ENCODE measurements at regions of chr2 and their contacts with region 1.

Region 1: GRCh38 chr2:112884869-112885505 is 26.0 kb upstream of the IL37 start:
- DNase-seq: peak; percentile 83
- CTCF ChIP-seq: peak; percentile 94

Region 2: DNA sequence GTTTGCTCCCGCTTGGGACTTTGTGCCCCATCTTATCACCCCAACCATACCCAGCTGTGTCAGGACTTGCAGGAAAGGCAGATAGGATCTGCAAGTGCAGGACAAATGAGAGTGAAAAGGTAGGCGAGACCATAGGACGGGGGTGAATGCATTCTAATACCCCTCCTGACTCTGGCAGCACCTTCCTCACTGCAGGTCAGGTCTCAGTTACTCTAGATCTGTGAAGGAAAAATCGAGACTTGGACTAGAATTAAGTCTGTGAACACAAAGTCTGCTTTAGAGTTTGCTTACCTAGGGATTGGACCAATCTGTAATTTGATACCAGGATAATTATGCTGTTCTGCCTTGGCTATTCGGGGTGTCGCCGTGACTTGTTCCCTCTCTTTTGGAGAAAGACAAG is 144.5 kb before region 1 on chr2:
- CTCF ChIA-PET with region 1: interaction called, 14 read pairs
- POLR2A ChIA-PET with region 1: no interaction called
- DNase-seq: no peak
- CTCF ChIP-seq: no peak

Region 3: GRCh38 chr2:112784199-112785189 is 100.5 kb before region 1 on chr2 and contains the start of gene IL1A:
- CTCF ChIA-PET with region 1: interaction called, 23 read pairs
- POLR2A ChIA-PET with region 1: no interaction called
- DNase-seq: no peak
- CTCF ChIP-seq: no peak

Region 4: DNA sequence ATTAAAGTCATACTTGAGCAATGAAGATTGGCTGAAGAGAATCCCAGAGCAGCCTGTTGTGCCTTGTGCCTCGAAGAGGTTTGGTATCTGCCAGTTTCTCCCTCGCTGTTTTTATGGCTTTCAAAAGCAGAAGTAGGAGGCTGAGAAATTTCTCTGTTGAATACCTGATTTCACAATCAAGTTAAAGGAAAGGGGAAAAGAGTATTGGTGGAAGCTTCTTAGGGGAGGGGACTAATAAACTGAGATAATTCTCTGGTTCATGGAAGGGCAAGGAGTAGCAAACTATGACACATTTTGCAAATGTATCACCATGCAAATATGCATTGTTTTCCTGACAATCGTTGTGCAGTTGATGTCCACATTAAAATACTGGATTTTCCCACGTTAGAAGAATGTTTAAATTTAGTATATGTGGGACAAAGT is 48.3 kb before region 1 on chr2 and contains the start of gene IL1B:
- CTCF ChIA-PET with region 1: interaction called, 11 read pairs
- POLR2A ChIA-PET with region 1: no interaction called
- DNase-seq: no peak
- CTCF ChIP-seq: no peak

Region 5: GRCh38 chr2:112869258-112869885 is 15.6 kb before region 1 on chr2:
- CTCF ChIA-PET with region 1: interaction called, 16 read pairs
- POLR2A ChIA-PET with region 1: no interaction called
- DNase-seq: no peak
- CTCF ChIP-seq: no peak

Region 6: GRCh38 chr2:112941753-112942658 is 57.0 kb after region 1 on chr2:
- CTCF ChIA-PET with region 1: interaction called, 33 read pairs
- POLR2A ChIA-PET with region 1: no interaction called
- DNase-seq: peak; percentile 76
- CTCF ChIP-seq: peak; percentile 98